H1 (cell line): ENCODE measurements at regions of chr18 and their contacts with region 1.

Region 1: GRCh38 chr18:44901283-44901682 is 220.6 kb downstream of the SETBP1 start:
- DNase-seq: no peak
- H3K4me3 ChIP-seq: no peak overlapping the region
- H3K27ac ChIP-seq: no peak overlapping the region
- H3K4me1 ChIP-seq: 0 out of 7 replicates have a peak, but pooled peaks cover 0 to 2% (median 0%) of the 10 kb centered on the region in 4 experiments
- H3K27me3 ChIP-seq: no peaks in the 10 kb centered on the region
- CTCF ChIP-seq: peak; percentile 37 to 45 (median 45)
- EP300 ChIP-seq: no peak
- POLR2A ChIP-seq: no peak
- RAD21 ChIP-seq: peak; percentile 41 to 59

Region 2: DNA sequence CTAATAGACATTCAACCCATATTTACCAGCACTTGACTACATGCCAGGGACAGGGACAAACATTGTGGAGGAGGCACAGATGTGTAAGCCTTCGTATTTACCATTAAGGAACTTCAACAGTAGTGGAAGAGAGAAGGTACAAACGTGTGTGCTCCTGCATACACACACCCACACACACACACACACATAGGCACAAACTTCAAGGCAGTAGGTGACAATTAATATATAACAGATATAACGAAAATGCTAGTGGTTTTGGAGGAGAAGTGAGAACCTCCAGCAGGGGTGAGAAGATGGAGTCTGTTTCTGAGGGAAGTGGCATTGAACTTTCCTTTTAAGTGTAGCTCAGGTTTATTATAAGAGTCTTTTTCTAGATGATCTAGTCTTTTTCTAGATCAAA is 10.5 kb after region 1 on chr18:
- CTCF ChIA-PET with region 1: interaction called, 10 read pairs
- POLR2A ChIA-PET with region 1: no interaction called
- DNase-seq: no peak
- H3K4me3 ChIP-seq: no peak overlapping the region
- H3K27ac ChIP-seq: no peak overlapping the region
- H3K4me1 ChIP-seq: no peaks in the 10 kb centered on the region
- H3K27me3 ChIP-seq: peaks cover 0 to 2% (median 0%) of the 10 kb centered on the region in 4 experiments; a peak in 1 of 7 replicates
- CTCF ChIP-seq: no peak
- EP300 ChIP-seq: no peak
- POLR2A ChIP-seq: no peak
- RAD21 ChIP-seq: no peak